Activated naive CD4-positive, alpha-beta T cell treated with anti-CD3 and anti-CD28 coated beads for 36 hours (primary cell): ENCODE measurements at regions of chr9 and their contacts with region 1.

Region 1: DNA sequence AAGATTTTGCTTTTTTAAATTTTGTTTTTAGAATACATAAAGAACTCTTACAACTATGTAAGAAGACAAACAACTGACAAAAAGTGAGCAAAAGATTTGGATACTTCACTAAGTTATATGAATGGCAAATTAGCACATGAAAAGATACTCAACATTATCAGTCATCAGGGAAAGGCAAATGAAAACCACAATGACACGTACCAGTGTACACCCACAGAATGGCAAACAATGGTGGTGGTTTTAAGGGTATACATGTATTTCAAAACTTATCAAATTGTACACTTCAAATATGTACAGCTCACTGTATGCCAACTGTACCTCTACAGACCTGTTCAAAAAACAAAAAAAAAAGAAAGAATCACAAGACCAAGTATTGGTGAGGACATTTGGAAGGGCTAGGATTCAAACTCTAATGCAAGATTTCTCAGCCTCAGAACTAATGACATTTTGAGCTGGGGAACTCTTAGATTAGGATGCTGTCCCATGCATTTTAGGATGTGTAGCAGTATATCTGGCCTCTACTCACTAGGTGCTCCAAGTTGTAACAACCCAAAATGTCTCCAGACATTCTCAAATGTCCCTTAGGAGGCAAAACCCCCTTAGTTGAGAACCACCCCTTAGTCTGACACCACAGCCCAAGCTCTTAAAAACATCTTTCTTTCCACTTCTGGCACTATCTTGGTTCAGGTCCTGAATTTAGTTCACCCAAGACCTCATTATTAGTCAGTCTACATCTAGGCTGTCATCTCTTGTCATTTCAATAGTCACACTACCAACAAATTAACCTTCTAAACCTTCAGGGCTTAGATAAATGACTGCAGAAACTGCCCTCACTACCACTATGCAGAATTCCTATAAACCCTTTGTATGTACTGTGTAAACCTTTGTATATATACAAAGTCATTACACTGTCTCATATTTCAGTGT is 9.7 kb downstream of the SCAI start:
- DNase-seq: peak; percentile 38
- H3K4me3 Mint-ChIP-seq: peak overlapping the region; percentile 39
- H3K27ac Mint-ChIP-seq: peak overlapping the region; percentile 92
- H3K4me1 Mint-ChIP-seq: peaks cover 34% of the 10 kb centered on the region
- H3K27me3 Mint-ChIP-seq: no peaks in the 10 kb centered on the region

Region 2: GRCh38 chr9:124964604-124965003 is 169.1 kb before region 1 on chr9:
- CTCF ChIA-PET with region 1: no interaction called
- intact Hi-C with region 1: loop called (anchors 5 kb)
- DNase-seq: no peak
- H3K4me3 Mint-ChIP-seq: no peak overlapping the region
- H3K27ac Mint-ChIP-seq: peak overlapping the region; percentile 90
- H3K4me1 Mint-ChIP-seq: peaks cover 34% of the 10 kb centered on the region
- H3K27me3 Mint-ChIP-seq: no peaks in the 10 kb centered on the region

Region 3: DNA sequence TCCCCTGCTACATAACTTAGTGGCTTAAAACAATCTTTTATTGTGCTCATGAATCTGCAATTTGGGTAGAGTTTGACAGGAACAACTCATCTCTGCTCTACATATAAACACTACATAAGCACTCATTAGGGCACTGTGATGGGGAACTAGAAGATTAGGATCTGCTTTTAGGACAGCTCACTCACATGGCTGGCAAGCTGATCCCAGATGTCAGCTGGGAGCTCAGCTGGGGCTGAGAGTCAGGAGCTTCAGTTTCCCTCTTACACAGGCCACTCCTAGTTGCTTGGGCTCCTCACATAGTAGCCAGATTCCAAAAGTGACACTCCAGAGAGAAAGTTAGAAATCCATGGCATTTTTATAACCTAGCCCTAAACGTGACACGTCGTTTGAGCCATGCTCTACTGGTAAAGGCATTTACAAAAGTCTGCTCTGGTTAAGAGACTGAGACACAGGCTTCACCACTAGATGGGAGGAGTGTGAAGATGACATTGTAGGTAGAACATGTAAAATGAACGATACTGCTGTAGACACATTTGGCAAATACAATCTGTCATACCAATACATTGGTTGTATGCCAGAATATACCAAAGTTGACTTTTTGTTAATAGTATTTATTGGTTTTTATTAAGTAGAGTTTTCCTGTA is 13.9 kb before region 1 on chr9:
- CTCF ChIA-PET with region 1: no interaction called
- intact Hi-C with region 1: loop called (anchors 1 kb)
- DNase-seq: peak; percentile 41
- H3K4me3 Mint-ChIP-seq: no peak overlapping the region
- H3K27ac Mint-ChIP-seq: no peak overlapping the region
- H3K4me1 Mint-ChIP-seq: peaks cover 39% of the 10 kb centered on the region
- H3K27me3 Mint-ChIP-seq: no peaks in the 10 kb centered on the region

Region 4: DNA sequence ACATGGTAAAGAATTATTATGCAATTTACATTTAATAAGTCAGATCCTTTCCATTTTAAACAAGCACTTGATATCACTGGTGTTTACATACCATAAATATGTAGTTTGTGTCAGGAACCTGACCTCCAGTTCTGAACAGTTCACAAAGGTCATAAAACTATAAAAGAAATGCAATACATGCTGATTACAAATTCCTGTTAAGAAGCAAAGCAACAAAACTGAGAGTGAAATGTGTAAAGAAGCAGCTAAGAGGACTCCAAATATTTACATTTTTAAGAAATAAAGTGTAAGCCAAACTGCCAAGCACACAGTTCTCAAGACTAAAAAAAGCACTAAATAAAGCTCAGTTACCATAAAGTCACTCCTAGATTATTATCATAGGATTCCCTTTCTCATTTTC is 27.1 kb after region 1 on chr9:
- CTCF ChIA-PET with region 1: no interaction called
- intact Hi-C with region 1: no loop called
- DNase-seq: no peak
- H3K4me3 Mint-ChIP-seq: no peak overlapping the region
- H3K27ac Mint-ChIP-seq: no peak overlapping the region
- H3K4me1 Mint-ChIP-seq: peaks cover 5% of the 10 kb centered on the region
- H3K27me3 Mint-ChIP-seq: no peaks in the 10 kb centered on the region